ENCODE measurements at regions of chr3 and their contacts with region 1.

Region 1: DNA sequence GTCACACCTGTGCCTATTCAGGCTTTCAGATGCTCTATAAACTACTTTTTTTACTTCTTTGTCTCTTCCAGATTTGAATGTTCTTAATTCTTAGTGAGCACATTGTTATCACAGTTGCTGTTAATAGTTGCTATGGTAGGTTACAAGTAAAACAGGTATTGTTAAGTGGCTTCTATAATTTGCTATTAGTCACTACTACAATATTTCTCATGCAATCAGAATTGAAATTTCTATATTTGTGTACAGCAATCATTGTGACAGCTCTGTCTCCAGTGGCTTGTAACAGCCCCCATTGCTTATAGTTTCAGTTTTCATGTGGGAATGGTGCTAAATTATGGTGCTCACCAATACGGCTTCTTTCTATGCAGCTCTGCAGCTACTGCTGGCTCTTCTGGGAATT is 318.4 kb upstream of the GOLIM4 start:
- DNase-seq: no peak
- ATAC-seq: no peak
- H3K4me3 ChIP-seq: no peak overlapping the region
- H3K27ac ChIP-seq: no peak overlapping the region
- H3K4me1 ChIP-seq: no peaks in the 10 kb centered on the region
- H3K27me3 ChIP-seq: no peaks in the 10 kb centered on the region
- CTCF ChIP-seq: no peak
- EP300 ChIP-seq: no peak
- POLR2A ChIP-seq: no peak
- RAD21 ChIP-seq: no peak

Region 2: DNA sequence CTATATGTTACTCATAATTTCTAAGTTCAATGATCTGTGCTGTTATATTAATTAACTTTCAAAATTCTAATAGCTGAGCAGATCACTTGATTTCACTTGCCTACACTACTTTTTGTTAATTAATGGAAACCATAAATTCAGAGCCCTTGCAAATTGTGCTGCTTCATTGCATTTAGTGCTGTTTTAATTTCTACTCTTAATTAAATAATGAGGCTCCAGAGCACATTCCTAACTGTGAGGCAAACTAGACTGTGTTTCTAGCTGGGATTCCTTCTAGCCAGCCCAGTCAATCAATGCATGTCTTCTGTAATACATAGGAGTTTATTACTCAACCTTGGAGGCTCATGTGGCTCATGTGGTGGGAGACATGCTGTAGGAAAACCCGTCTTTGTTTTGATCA is 17.3 kb before region 1 on chr3:
- CTCF ChIA-PET with region 1: no interaction called
- POLR2A ChIA-PET with region 1: no interaction called
- in situ Hi-C with region 1: no loop called
- intact Hi-C with region 1: loop called (anchors 2 kb)
- DNase-seq: no peak
- ATAC-seq: no peak
- H3K4me3 ChIP-seq: no peak overlapping the region
- H3K27ac ChIP-seq: no peak overlapping the region
- H3K4me1 ChIP-seq: no peaks in the 10 kb centered on the region
- H3K27me3 ChIP-seq: no peaks in the 10 kb centered on the region
- CTCF ChIP-seq: no peak
- EP300 ChIP-seq: no peak
- POLR2A ChIP-seq: no peak
- RAD21 ChIP-seq: no peak